ENCODE measurements at regions of chr13 and their contacts with region 1.

Region 1: DNA sequence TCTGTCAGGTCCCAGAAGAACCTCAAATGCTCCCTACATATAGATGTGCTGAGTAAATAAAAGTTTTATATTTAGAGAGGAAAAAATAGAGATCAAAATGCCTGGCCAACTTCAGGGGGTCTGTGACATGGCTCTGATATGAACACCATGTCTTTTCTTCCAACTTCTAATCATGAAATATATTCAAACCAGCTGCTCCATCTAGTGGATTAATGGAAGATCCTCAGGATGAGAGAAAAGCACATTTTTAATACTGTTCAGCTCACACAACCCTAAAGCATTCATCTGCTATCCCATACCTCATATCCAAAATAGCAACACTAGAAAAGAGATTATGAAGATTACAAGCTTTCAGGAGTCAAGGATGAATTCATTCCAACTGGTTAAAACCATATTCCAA is 56.0 kb upstream of the DOCK9 start:
- DNase-seq: peak in 5 of 9 donors; percentile 33 to 53 (median 41)
- ATAC-seq: peak; percentile 69
- H3K4me3 ChIP-seq: no peak overlapping the region
- H3K4me3 Mint-ChIP-seq: peak overlapping the region in 2 of 10 donors; percentile 2
- H3K27ac ChIP-seq: no peak overlapping the region
- H3K27ac Mint-ChIP-seq: peak overlapping the region in 6 of 9 donors; percentile 0 to 81 (median 18)
- H3K4me1 ChIP-seq: peaks cover 0 to 15% of the 10 kb centered on the region in 2 donors
- H3K4me1 Mint-ChIP-seq: peaks cover 18 to 66% (median 59%) of the 10 kb centered on the region in 7 donors
- H3K27me3 ChIP-seq: no peaks in the 10 kb centered on the region
- H3K27me3 Mint-ChIP-seq: peaks cover 0 to 9% (median 0%) of the 10 kb centered on the region in 5 donors

Region 2: DNA sequence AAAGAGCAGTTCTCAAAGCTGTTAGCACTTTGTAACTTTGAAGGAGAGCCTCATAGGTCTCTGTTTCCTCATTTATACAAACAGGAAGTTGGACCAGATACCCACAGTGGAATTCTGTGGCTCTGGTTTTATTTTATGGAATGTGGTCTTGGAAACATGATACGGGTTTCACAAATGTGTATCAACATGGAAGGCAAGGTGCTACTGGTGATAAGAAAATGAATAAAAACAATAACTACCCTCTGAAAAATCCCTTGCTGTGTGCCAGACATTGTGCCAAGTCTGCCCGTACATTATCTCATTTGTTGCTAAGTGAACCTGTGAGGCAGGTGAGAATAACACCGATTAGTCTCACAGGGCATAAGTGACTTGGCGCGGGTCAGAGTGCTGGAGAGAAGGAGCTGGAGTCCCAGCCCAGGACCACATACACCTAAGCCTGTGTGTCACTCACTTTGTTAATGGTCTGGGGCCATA is 811.7 kb before region 1 on chr13:
- CTCF ChIA-PET with region 1: no interaction called
- POLR2A ChIA-PET with region 1: no interaction called
- intact Hi-C with region 1: no loop called
- DNase-seq: no peak
- ATAC-seq: no peak
- H3K4me3 ChIP-seq: no peak overlapping the region
- H3K4me3 Mint-ChIP-seq: no peak overlapping the region
- H3K27ac ChIP-seq: no peak overlapping the region
- H3K27ac Mint-ChIP-seq: no peak overlapping the region
- H3K4me1 ChIP-seq: no peaks in the 10 kb centered on the region
- H3K4me1 Mint-ChIP-seq: no peaks in the 10 kb centered on the region
- H3K27me3 ChIP-seq: no peaks in the 10 kb centered on the region
- H3K27me3 Mint-ChIP-seq: peaks cover 2 to 18% (median 7%) of the 10 kb centered on the region in 5 donors

Region 3: GRCh38 chr13:98445340-98446233 is 588.2 kb before region 1 on chr13:
- CTCF ChIA-PET with region 1: no interaction called
- POLR2A ChIA-PET with region 1: no interaction called
- intact Hi-C with region 1: loop called in 1 of 2 experiments (anchors 5 kb)
- DNase-seq: peak; percentile 59 to 82 (median 73)
- ATAC-seq: peak; percentile 95
- H3K4me3 ChIP-seq: no peak overlapping the region
- H3K4me3 Mint-ChIP-seq: peak overlapping the region in 9 of 10 donors; percentile 8 to 76 (median 68)
- H3K27ac ChIP-seq: peak overlapping the region; percentile 58
- H3K27ac Mint-ChIP-seq: peak overlapping the region; percentile 46 to 92 (median 88)
- H3K4me1 ChIP-seq: peaks cover 10 to 15% of the 10 kb centered on the region in 2 donors
- H3K4me1 Mint-ChIP-seq: peaks cover 0 to 23% (median 14%) of the 10 kb centered on the region in 7 donors
- H3K27me3 ChIP-seq: no peaks in the 10 kb centered on the region
- H3K27me3 Mint-ChIP-seq: no peaks in the 10 kb centered on the region

Region 4: DNA sequence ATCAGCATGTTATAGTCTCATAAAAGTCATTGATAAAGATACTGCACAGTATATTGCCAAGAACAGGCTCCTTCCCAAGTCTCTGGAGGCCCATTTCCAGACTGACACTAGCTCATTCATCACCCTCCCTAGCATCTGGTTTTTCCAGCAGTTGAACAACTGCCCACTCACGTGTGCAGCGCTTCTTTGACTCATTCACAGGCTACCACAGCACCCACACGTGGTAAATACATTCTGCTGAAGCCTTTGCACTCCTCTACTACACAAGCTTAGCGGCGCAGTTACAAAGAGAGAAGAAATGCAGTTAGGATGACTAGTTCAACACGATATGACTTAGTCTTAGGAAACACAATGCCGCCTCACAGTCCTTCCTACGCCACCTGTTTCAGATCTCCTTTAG is 143.6 kb before region 1 on chr13:
- CTCF ChIA-PET with region 1: interaction called, 3 read pairs
- POLR2A ChIA-PET with region 1: no interaction called
- intact Hi-C with region 1: loop called in 1 of 2 experiments (anchors 5 kb)
- DNase-seq: peak in 1 of 9 donors; percentile 56
- ATAC-seq: no peak
- H3K4me3 ChIP-seq: no peak overlapping the region
- H3K4me3 Mint-ChIP-seq: no peak overlapping the region
- H3K27ac ChIP-seq: no peak overlapping the region
- H3K27ac Mint-ChIP-seq: peak overlapping the region in 6 of 9 donors; percentile 9 to 60 (median 42)
- H3K4me1 ChIP-seq: no peaks in the 10 kb centered on the region
- H3K4me1 Mint-ChIP-seq: peaks cover 0 to 17% (median 3%) of the 10 kb centered on the region in 7 donors
- H3K27me3 ChIP-seq: no peaks in the 10 kb centered on the region
- H3K27me3 Mint-ChIP-seq: no peaks in the 10 kb centered on the region

Region 5: GRCh38 chr13:98997738-98998641 is 35.8 kb before region 1 on chr13:
- CTCF ChIA-PET with region 1: interaction called, 3 read pairs
- POLR2A ChIA-PET with region 1: interaction called, 3 read pairs
- intact Hi-C with region 1: loop called in 1 of 2 experiments (anchors 2 kb)
- DNase-seq: no peak
- ATAC-seq: no peak
- H3K4me3 ChIP-seq: no peak overlapping the region
- H3K4me3 Mint-ChIP-seq: peak overlapping the region; percentile 46 to 84 (median 72)
- H3K27ac ChIP-seq: peak overlapping the region; percentile 90
- H3K27ac Mint-ChIP-seq: peak overlapping the region; percentile 44 to 99 (median 96)
- H3K4me1 ChIP-seq: peaks cover 33 to 89% of the 10 kb centered on the region in 2 donors
- H3K4me1 Mint-ChIP-seq: peaks cover 60 to 100% (median 99%) of the 10 kb centered on the region in 7 donors
- H3K27me3 ChIP-seq: no peaks in the 10 kb centered on the region
- H3K27me3 Mint-ChIP-seq: no peaks in the 10 kb centered on the region

Region 6: DNA sequence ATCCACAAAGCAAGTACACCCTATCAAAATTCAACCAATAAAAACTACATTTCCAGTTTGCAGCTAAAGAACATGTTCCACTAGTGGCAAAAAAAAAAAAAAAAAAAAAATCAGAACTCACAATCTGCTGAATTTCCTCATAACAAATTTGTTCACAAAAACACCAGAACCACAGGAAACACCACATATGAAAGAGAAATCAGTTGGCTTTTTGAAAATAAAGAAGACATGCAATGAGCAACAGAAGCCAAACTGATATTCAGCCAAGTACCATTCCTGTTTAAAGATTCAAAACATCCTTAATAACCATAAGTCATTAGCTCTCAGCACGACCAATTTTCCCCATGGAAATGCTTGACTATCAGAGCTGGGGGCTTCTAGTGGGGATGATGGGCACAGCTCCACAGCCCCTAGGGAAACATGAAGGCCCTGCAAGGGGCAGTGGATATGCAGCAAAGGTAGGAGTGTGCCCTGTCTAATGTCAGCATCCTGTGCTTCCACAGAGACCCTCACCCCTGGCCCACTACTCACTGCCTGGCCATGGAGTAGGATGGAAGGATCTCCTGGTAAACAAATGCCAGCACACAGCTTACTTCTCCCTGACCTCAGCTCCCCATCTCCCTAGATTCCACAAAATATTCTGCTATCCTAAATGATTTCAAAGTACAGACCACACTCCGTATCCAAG is 18.1 kb after region 1 on chr13:
- CTCF ChIA-PET with region 1: interaction called, 5 read pairs
- POLR2A ChIA-PET with region 1: interaction called, 9 read pairs
- intact Hi-C with region 1: loop called in 1 of 2 experiments (anchors 2 kb)
- DNase-seq: peak in 7 of 9 donors; percentile 48 to 81 (median 71)
- ATAC-seq: peak; percentile 65
- H3K4me3 ChIP-seq: peak overlapping the region; percentile 49
- H3K4me3 Mint-ChIP-seq: peak overlapping the region; percentile 75 to 88 (median 80)
- H3K27ac ChIP-seq: peak overlapping the region; percentile 61
- H3K27ac Mint-ChIP-seq: peak overlapping the region; percentile 72 to 96 (median 91)
- H3K4me1 ChIP-seq: peaks cover 72 to 95% of the 10 kb centered on the region in 2 donors
- H3K4me1 Mint-ChIP-seq: peaks cover 68 to 100% (median 92%) of the 10 kb centered on the region in 7 donors
- H3K27me3 ChIP-seq: no peaks in the 10 kb centered on the region
- H3K27me3 Mint-ChIP-seq: peaks cover 0 to 10% (median 0%) of the 10 kb centered on the region in 5 donors

Region 7: DNA sequence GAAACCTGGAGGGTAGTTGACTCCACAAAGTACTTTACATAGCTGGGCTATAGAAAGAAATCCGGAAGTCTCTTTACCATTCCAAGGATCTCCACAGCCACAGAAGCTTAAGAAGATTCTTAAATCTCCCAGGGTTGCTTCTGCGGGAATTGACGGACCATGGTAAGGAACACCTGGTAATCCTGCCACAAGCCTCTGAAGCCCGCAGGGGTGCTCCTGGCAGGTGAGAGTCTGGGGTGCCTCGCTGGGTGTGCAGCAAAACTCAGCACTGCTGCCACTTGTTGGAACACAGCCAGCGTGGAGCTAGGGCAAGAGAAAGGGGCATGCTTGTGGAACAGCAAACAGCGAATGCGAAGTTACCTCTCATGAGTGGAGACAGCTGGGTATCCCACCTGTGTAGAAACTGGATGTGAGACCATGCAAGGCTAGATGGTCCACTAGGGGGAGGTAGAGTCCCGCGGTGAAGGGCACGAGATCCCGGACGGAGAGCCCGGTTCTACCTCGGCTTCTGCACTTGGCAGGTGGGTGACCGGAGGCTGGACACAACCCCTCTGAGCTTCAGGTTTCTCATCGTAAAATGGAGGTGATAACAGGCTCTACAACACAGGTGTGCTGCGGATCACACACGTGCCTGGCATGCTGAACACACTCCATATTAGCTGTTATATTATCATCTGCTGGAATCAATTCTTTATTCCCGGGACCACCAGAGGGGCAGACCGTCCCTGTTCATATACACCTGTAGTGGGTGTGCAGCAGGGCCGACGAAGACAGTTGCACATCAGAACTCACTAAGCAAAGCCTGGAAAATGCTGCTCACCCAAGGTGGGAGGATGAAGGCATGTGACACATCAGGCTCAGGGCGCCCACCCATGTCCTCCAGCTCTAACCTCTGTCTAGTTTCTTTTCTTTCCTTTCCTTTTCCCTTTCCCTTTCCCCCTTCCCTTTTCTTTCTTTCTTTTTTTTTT is 142.8 kb after region 1 on chr13:
- CTCF ChIA-PET with region 1: interaction called, 3 read pairs
- POLR2A ChIA-PET with region 1: no interaction called
- intact Hi-C with region 1: loop called in 1 of 2 experiments (anchors 5 kb)
- DNase-seq: peak; percentile 54 to 79 (median 71)
- ATAC-seq: peak; percentile 95
- H3K4me3 ChIP-seq: peak overlapping the region; percentile 1
- H3K4me3 Mint-ChIP-seq: peak overlapping the region; percentile 39 to 81 (median 72)
- H3K27ac ChIP-seq: no peak overlapping the region
- H3K27ac Mint-ChIP-seq: peak overlapping the region in 8 of 9 donors; percentile 34 to 77 (median 54)
- H3K4me1 ChIP-seq: peaks cover 22 to 24% of the 10 kb centered on the region in 2 donors
- H3K4me1 Mint-ChIP-seq: peaks cover 26 to 44% (median 39%) of the 10 kb centered on the region in 7 donors
- H3K27me3 ChIP-seq: no peaks in the 10 kb centered on the region
- H3K27me3 Mint-ChIP-seq: peaks cover 0 to 13% (median 0%) of the 10 kb centered on the region in 5 donors

Region 8: DNA sequence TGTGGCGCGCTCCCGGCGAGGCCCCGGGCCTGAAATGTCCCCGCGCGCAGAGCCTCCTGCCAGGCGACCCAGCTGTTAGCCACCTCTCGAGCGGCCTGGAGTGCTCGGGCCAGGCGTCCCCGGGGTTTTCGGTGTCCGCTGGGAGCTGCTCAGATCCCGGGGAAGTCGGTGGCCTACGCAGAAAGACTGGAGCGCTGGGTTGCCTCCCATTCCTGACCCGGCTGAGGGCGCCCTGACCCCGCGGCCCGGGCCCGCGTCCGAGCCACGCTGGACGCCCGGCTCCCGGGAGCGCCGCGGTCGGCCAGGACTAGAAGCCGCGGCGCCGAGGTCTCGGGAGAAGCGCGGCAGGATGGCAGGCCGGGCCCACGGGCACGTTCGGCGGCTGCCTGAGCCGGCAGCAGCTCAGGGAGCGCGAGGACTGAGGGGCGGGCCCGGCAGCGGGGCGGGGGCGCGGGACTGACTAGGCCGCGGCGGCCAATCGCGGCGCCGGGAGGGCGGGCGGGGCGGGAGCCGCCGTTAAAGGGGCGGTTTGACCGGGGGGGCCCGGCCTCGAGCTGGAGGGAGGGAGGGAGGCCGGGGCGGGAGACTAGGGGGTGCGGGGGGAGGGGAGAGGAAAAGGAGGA is 946.5 kb after region 1 on chr13:
- CTCF ChIA-PET with region 1: no interaction called
- POLR2A ChIA-PET with region 1: no interaction called
- intact Hi-C with region 1: no loop called
- DNase-seq: peak in 6 of 9 donors; percentile 44 to 64 (median 55)
- ATAC-seq: peak; percentile 78
- H3K4me3 ChIP-seq: no peak overlapping the region
- H3K4me3 Mint-ChIP-seq: peak overlapping the region in 4 of 10 donors; percentile 42 to 68 (median 59)
- H3K27ac ChIP-seq: no peak overlapping the region
- H3K27ac Mint-ChIP-seq: no peak overlapping the region
- H3K4me1 ChIP-seq: peaks cover 8 to 18% of the 10 kb centered on the region in 2 donors
- H3K4me1 Mint-ChIP-seq: peaks cover 0 to 35% (median 23%) of the 10 kb centered on the region in 7 donors
- H3K27me3 ChIP-seq: peaks cover 22 to 66% of the 10 kb centered on the region in 2 donors
- H3K27me3 Mint-ChIP-seq: peaks cover 51 to 71% (median 54%) of the 10 kb centered on the region in 5 donors